HCT116 (cell line): ENCODE measurements at regions of chr2 and their contacts with region 1.

Region 1: GRCh38 chr2:81894451-81894990 is 1590.0 kb upstream of the LRRTM1 start:
- DNase-seq: no peak
- ATAC-seq: no peak
- H3K4me3 ChIP-seq: no peak overlapping the region
- H3K27ac ChIP-seq: no peak overlapping the region
- H3K4me1 ChIP-seq: no peaks in the 10 kb centered on the region
- H3K27me3 ChIP-seq: no peaks in the 10 kb centered on the region
- CTCF ChIP-seq: peak in 2 of 3 experiments; percentile 10 to 28; a peak in 1 of 6 replicates
- POLR2A ChIP-seq: no peak
- RAD21 ChIP-seq: peak; percentile 64

Region 2: DNA sequence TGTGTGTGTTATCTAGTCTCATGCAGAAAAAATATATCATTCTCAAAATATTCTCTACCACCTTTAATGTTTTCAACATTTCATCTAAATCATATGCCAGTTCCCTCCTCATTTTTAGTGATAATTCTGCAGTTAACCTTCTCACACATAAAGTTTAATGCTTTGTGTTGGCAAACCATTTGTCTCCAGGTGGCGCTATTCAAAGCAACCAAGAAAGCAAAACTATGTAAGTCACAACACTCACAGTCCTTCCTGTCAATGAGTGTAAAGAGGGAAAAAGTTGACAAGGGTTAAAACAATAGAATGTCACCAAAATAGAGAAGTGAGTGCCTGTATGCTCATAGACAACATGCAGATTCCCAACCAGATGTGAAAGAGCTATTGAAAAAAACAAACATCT is 628.4 kb before region 1 on chr2:
- CTCF ChIA-PET with region 1: no interaction called
- POLR2A ChIA-PET with region 1: no interaction called
- RAD21 ChIA-PET with region 1: no interaction called
- intact Hi-C with region 1: loop called (anchors 5 kb)
- DNase-seq: peak; percentile 48
- ATAC-seq: peak; percentile 74
- H3K4me3 ChIP-seq: no peak overlapping the region
- H3K27ac ChIP-seq: no peak overlapping the region
- H3K4me1 ChIP-seq: no peaks in the 10 kb centered on the region
- H3K27me3 ChIP-seq: no peaks in the 10 kb centered on the region
- CTCF ChIP-seq: peak; percentile 35 to 78 (median 76); a peak in 5 of 6 replicates
- POLR2A ChIP-seq: no peak
- RAD21 ChIP-seq: peak; percentile 56

Region 3: GRCh38 chr2:81324046-81324445 is 570.5 kb before region 1 on chr2:
- CTCF ChIA-PET with region 1: interaction called, 7 read pairs
- POLR2A ChIA-PET with region 1: no interaction called
- RAD21 ChIA-PET with region 1: interaction called in 1 of 2 experiments, 3 read pairs
- intact Hi-C with region 1: loop called (anchors 5 kb)
- DNase-seq: peak; percentile 18
- ATAC-seq: peak; percentile 83
- H3K4me3 ChIP-seq: no peak overlapping the region
- H3K27ac ChIP-seq: no peak overlapping the region
- H3K4me1 ChIP-seq: no peaks in the 10 kb centered on the region
- H3K27me3 ChIP-seq: no peaks in the 10 kb centered on the region
- CTCF ChIP-seq: peak; percentile 32 to 58 (median 56); a peak in 5 of 6 replicates
- POLR2A ChIP-seq: no peak
- RAD21 ChIP-seq: peak; percentile 63